CD8-positive, alpha-beta memory T cell (primary cell): ENCODE measurements at regions of chr7 and their contacts with region 1.

Region 1: DNA sequence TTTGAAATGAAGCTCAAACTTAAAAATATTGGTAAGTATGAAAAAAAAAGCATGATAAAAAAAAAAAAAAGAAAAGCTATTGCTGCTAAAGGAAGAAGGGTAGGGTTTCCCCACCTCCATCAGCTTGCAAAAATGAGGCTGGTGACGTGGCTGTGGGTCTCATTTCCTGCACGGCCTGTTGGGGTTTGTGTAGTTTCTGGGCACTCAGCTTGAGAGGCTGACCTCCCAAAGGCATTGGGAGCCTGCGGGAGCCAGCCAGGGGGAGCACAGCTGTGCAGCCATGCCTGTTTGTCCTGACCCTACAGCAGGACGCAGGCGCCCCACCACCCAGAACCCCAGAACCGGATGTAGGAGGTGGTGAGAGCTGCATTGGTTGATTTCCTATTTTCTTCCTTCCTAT is 48.8 kb upstream of the CARD11 start:
- DNase-seq: peak; percentile 56 to 86 (median 78)
- H3K4me3 ChIP-seq: peak overlapping the region; percentile 27
- H3K4me3 Mint-ChIP-seq: peak overlapping the region; percentile 67 to 81 (median 75)
- H3K27ac ChIP-seq: peak overlapping the region; percentile 51
- H3K27ac Mint-ChIP-seq: peak overlapping the region; percentile 88 to 99 (median 98)
- H3K4me1 ChIP-seq: peaks cover 75% of the 10 kb centered on the region
- H3K4me1 Mint-ChIP-seq: peaks cover 67 to 80% (median 78%) of the 10 kb centered on the region in 3 donors
- H3K27me3 ChIP-seq: no peaks in the 10 kb centered on the region
- H3K27me3 Mint-ChIP-seq: no peaks in the 10 kb centered on the region

Region 2: DNA sequence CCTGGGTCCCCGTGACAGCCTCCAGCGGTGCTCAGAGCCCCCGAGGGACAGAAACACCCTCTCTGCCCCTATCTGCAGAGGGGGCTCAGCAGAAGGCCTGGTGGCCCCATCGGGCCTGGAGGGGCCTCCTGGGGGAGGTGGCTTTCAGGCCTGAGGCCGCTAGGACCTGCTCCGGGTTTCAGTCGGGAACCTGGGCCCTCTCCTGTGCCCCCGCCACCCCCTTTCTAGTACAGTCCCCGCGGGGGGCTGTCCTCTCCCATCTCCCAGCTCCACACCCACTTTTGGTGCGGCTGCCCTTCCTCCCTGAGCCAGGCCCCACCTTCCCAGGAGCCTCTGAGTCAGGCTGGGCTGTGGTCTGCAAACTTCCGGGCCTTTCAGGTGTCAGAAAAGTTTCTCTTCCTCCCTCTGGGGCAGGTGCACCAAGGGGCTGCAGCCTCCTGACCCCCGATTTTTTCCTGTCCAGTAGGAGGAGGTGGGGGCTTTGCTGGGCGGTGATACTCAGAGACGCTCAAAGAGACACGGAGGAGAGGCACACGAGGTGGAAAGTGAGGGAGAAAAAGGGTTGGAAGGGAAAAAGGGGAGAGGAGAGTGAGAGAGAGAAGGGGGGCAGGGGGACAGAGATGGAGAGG is 49.5 kb before region 1 on chr7:
- CTCF ChIA-PET with region 1: interaction called, 4 read pairs
- POLR2A ChIA-PET with region 1: interaction called, 10 read pairs
- DNase-seq: peak; percentile 53 to 82 (median 64)
- H3K4me3 ChIP-seq: peak overlapping the region; percentile 82
- H3K4me3 Mint-ChIP-seq: peak overlapping the region; percentile 93 to 99 (median 96)
- H3K27ac ChIP-seq: peak overlapping the region; percentile 76
- H3K27ac Mint-ChIP-seq: peak overlapping the region; percentile 69 to 98 (median 94)
- H3K4me1 ChIP-seq: peaks cover 53% of the 10 kb centered on the region
- H3K4me1 Mint-ChIP-seq: peaks cover 45 to 63% (median 54%) of the 10 kb centered on the region in 3 donors
- H3K27me3 ChIP-seq: no peaks in the 10 kb centered on the region
- H3K27me3 Mint-ChIP-seq: peaks cover 0 to 2% of the 10 kb centered on the region in 2 donors